ENCODE measurements at regions of chr10 and their contacts with region 1.

Region 1: DNA sequence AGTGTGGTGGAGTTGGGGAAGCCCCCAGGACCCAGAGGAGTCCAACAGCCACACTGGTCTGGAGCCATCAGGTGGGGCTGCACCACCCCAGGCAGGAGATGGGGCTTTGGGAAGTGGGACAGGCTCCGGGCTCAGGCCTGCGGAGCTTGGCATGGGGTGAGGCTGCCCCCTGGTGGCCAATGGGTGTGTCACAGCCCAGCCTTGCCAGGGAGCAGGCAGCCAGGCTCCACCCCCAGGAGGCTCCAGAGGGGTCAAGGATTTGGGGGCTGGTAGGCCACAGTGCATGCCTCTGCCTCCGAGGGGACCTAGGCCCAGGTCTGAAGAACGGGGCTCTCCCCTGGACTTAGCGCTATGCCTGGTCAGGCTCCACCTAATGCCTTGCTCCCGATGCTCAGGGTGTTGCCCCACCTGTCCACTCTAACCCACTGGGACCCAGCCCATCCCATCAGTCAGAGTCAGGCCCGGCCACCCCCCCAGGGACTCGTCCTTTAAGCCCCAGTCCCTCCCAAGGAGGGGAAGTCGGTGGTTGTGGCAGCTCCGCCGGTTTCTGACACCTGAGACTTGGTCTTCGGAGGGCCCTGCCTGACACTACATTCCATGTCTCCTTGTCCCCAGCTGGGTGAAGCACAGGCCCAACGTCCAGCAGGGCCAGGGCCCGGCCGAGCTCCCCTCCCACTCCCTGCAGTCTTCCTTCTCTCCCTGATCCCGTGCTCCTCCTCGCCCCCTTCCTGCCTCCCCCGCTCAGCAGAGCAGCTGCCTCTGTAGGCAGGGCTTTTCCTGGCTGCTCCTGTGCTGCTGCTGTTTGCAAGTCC is 11.3 kb upstream of the SAMD8 start:
- DNase-seq: no peak
- H3K4me3 ChIP-seq: no peak overlapping the region
- H3K27ac ChIP-seq: no peak overlapping the region
- H3K4me1 ChIP-seq: peaks cover 21 to 42% (median 24%) of the 10 kb centered on the region in 3 donors
- H3K27me3 ChIP-seq: no peaks in the 10 kb centered on the region
- CTCF ChIP-seq: peak; percentile 95 to 99 (median 96)
- POLR2A ChIP-seq: no peak

Region 2: GRCh38 chr10:74244097-74244685 is 856.0 kb before region 1 on chr10:
- intact Hi-C with region 1: loop called (anchors 5 kb)
- DNase-seq: no peak
- H3K4me3 ChIP-seq: no peak overlapping the region
- H3K27ac ChIP-seq: no peak overlapping the region
- H3K4me1 ChIP-seq: no peaks in the 10 kb centered on the region
- H3K27me3 ChIP-seq: no peaks in the 10 kb centered on the region
- CTCF ChIP-seq: peak in 5 of 6 experiments; percentile 21 to 64 (median 53)
- POLR2A ChIP-seq: no peak

Region 3: DNA sequence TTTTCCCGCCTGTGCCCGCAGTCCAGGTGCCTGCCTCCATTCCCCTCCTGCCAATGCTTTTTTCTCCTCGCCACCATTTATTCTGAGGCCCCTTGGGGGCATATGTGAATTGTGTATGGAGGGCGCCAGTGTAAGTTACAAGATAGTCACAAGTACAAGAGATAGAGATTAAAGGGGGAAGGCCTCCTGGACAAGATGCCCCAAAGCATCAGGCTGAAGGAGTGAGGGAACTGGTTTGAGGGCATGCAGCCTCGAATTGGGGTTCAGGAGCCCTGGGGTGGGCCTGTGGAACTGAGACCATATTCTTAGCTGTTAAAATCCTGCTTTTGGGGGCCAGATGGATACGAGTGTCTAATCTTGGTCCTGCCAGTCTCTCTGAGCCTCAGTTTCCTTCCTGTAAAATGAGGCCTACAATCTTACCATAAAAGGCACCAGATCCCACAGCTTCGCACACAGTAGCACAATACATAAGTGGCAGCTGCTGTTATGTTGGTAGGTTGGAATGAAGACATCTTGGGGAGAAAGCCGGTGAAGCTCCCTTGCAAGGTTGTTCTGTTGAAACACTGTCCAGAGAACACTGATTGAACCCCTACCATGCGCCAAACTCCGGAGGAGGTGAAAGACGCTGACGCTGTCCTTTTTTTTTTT is 136.1 kb after region 1 on chr10:
- intact Hi-C with region 1: no loop called
- DNase-seq: no peak
- H3K4me3 ChIP-seq: peak overlapping the region in 3 of 4 donors; percentile 62 to 82 (median 70)
- H3K27ac ChIP-seq: peak overlapping the region; percentile 97 to 99 (median 98)
- H3K4me1 ChIP-seq: peaks cover 13 to 65% (median 21%) of the 10 kb centered on the region in 3 donors
- H3K27me3 ChIP-seq: no peaks in the 10 kb centered on the region
- CTCF ChIP-seq: no peak
- POLR2A ChIP-seq: peak in 1 of 4 donors; percentile 3

Region 4: GRCh38 chr10:75475470-75476182 is 375.5 kb after region 1 on chr10:
- intact Hi-C with region 1: no loop called
- DNase-seq: no peak
- H3K4me3 ChIP-seq: no peak overlapping the region
- H3K27ac ChIP-seq: peak overlapping the region in 2 of 4 donors; percentile 9 to 15
- H3K4me1 ChIP-seq: peaks cover 2 to 33% (median 7%) of the 10 kb centered on the region in 3 donors
- H3K27me3 ChIP-seq: no peaks in the 10 kb centered on the region
- CTCF ChIP-seq: no peak
- POLR2A ChIP-seq: no peak